Activated CD4-positive, alpha-beta T cell treated with anti-CD3 and anti-CD28 coated beads for 36 hours (primary cell): ENCODE measurements at regions of chr5 and their contacts with region 1.

Region 1: DNA sequence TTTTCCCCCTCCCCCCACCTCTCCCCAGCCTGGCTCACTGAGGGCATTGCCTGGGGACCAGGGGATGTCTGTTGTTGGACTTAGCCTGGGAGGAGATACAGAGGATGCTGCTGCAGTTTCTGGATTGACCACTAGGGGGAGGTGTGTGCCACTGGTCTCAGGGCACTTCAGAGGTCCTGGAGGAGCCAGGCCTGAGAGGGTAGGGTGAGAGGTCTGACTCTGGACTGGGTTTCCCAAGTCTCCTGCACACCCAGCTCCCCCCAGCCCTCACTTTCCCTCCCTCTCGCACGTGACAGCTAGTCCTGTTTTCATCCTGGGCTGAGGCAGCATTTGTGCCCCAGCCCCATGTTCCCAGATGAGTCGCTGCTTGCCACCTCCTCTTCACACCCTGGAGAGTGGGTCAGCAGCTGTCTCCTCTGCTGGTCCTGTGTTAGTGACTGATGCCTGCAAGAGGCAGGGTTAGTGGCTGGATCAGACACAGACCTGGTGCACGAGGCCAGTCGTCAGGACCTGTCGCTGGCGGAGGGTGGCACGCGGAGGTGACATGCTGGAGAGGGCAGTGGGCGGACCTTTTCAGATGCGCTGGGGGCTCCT is 4.4 kb downstream of the IL3 start:
- DNase-seq: peak; percentile 90
- ATAC-seq: peak; percentile 75
- H3K4me3 Mint-ChIP-seq: no peak overlapping the region
- H3K27ac Mint-ChIP-seq: no peak overlapping the region
- H3K4me1 Mint-ChIP-seq: peaks cover 19% of the 10 kb centered on the region
- H3K27me3 Mint-ChIP-seq: no peaks in the 10 kb centered on the region

Region 2: DNA sequence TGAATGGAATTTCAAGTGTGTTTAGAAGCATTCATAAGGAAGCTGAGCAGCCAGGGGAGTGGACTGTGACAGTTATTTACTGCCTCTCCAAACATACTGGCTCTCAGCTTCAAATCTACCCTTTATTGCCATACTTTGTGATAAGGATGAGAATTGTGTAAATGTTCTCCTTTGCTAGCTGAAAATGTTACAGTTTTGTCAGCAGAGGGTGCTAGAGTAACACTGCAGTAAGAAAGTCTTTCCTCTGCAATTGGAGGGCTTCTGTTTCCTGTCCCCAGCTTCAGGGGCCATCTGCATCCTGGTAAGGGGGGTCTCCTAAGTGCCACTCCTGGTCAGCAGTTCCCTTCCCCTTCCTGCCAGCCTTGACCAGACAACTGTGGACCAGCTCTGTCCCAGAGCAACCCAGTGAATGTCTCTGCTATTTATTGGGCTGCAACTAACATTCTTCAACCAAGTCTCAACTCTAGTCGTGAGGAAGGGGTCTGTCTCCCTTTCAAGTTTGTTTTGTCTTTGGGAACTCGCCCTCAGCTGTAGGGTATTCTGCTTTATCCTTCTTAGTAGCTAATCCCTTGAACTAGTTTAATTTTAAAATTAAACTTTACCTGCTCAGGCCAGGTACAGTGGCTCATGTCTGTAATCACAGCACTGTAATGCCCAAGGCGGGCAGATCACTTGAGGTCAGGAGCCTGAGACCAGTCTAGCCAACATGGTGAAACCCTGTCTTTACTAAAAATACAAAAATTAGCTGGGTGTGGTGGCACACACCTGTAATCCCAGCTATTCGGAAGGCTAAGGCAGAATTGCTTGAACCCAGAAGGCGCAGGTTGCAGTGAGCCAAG is 475.1 kb before region 1 on chr5:
- CTCF ChIA-PET with region 1: interaction called, 30 read pairs
- POLR2A ChIA-PET with region 1: no interaction called
- intact Hi-C with region 1: loop called (anchors 1 kb)
- DNase-seq: peak; percentile 13
- ATAC-seq: peak; percentile 74
- H3K4me3 Mint-ChIP-seq: no peak overlapping the region
- H3K27ac Mint-ChIP-seq: no peak overlapping the region
- H3K4me1 Mint-ChIP-seq: peaks cover 40% of the 10 kb centered on the region
- H3K27me3 Mint-ChIP-seq: no peaks in the 10 kb centered on the region

Region 3: DNA sequence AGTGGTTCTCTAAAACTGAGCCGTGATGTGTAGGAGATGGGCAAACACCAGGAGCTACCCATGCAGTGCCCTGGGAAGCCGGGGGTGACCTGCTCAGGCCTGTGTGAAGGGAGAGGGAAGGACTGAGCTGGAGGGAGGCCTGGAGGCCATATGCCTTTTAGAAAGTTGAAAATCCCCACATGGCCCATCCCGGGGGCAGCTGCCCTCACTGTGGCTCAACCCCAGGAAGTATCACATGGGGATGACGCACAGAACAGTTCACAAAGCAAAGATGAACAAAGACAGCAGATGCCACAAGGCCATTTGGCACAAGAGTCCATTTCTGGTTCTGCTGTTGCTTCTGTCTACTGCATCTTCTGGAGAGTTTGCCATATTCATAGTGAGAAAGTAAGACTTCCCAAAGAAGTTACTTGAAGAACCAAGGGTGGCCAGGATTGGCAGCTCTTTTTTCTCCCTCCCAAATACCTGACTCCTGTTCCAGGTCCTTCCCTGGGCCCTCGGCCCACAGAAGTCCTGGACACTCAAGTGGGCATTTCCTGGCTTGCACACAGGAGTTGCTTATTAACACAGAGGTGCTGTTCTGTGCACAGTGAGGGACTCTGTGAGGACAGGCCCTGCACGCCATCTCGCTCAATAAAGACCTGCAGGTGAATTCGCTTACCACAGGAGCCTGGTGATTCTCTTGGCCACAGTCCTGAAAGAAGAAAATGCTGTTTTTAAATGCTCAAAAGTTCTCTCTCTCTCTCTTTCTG is 78.5 kb before region 1 on chr5:
- CTCF ChIA-PET with region 1: no interaction called
- POLR2A ChIA-PET with region 1: no interaction called
- intact Hi-C with region 1: no loop called
- DNase-seq: no peak
- ATAC-seq: no peak
- H3K4me3 Mint-ChIP-seq: no peak overlapping the region
- H3K27ac Mint-ChIP-seq: no peak overlapping the region
- H3K4me1 Mint-ChIP-seq: peaks cover 4% of the 10 kb centered on the region
- H3K27me3 Mint-ChIP-seq: no peaks in the 10 kb centered on the region

Region 4: GRCh38 chr5:132007399-132008165 is 57.3 kb before region 1 on chr5:
- CTCF ChIA-PET with region 1: interaction called, 16 read pairs
- POLR2A ChIA-PET with region 1: no interaction called
- intact Hi-C with region 1: loop called in 1 of 2 experiments (anchors 2 kb)
- DNase-seq: peak; percentile 90
- ATAC-seq: peak; percentile 79
- H3K4me3 Mint-ChIP-seq: no peak overlapping the region
- H3K27ac Mint-ChIP-seq: no peak overlapping the region
- H3K4me1 Mint-ChIP-seq: peaks cover 21% of the 10 kb centered on the region
- H3K27me3 Mint-ChIP-seq: peaks cover 28% of the 10 kb centered on the region

Region 5: GRCh38 chr5:132180134-132180745 is 115.4 kb after region 1 on chr5:
- CTCF ChIA-PET with region 1: interaction called, 23 read pairs
- POLR2A ChIA-PET with region 1: no interaction called
- intact Hi-C with region 1: loop called (anchors 1 kb)
- DNase-seq: peak; percentile 19
- ATAC-seq: peak; percentile 38
- H3K4me3 Mint-ChIP-seq: no peak overlapping the region
- H3K27ac Mint-ChIP-seq: peak overlapping the region; percentile 73
- H3K4me1 Mint-ChIP-seq: peaks cover 36% of the 10 kb centered on the region
- H3K27me3 Mint-ChIP-seq: no peaks in the 10 kb centered on the region

Region 6: DNA sequence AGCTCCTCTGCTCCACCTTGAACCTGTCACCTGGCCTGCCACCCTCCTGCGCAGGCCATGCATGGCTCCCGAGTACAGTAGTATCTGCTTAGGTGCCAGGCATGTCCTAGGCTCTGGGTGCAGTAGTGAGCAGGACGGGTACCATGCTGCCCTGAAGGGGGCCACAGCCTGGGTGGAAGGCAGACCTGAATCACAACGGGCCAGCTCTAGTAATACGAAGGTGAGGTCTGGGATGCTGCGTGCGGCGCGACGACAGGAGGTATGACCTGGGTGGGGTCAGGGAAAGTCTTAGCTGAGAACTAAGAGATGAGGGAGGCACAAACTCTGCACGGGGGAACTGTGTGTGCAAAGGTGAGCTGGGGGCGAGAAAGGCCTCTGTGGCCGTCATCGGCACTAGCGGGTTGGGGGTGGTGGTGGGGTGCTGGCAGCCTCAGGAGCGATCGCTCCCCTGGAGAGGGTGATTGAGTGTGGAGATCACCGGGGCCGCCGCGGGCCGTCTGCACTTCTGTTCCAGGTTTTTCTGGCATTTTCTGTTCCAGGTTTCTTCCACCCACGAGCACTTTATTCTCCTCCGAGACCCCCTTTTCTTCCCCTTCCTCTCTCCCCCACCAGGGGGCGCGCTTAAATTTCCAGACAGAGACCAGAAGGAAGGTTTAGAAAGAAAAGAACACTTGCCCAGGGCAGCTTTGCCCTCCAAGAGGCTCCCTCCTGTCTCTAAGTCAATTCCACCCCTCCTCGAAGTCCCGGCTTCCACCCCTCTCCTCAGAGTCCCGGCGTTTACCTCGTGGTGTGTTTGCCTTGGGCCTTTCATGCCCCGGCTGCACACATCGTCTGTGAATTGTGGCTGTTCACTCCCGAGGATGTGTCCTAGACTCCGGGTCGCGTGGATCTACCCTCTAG is 207.7 kb after region 1 on chr5:
- CTCF ChIA-PET with region 1: interaction called, 4 read pairs
- POLR2A ChIA-PET with region 1: no interaction called
- intact Hi-C with region 1: loop called in 1 of 2 experiments (anchors 5 kb)
- DNase-seq: peak; percentile 85
- ATAC-seq: peak; percentile 42
- H3K4me3 Mint-ChIP-seq: no peak overlapping the region
- H3K27ac Mint-ChIP-seq: no peak overlapping the region
- H3K4me1 Mint-ChIP-seq: peaks cover 2% of the 10 kb centered on the region
- H3K27me3 Mint-ChIP-seq: peaks cover 18% of the 10 kb centered on the region

Region 7: DNA sequence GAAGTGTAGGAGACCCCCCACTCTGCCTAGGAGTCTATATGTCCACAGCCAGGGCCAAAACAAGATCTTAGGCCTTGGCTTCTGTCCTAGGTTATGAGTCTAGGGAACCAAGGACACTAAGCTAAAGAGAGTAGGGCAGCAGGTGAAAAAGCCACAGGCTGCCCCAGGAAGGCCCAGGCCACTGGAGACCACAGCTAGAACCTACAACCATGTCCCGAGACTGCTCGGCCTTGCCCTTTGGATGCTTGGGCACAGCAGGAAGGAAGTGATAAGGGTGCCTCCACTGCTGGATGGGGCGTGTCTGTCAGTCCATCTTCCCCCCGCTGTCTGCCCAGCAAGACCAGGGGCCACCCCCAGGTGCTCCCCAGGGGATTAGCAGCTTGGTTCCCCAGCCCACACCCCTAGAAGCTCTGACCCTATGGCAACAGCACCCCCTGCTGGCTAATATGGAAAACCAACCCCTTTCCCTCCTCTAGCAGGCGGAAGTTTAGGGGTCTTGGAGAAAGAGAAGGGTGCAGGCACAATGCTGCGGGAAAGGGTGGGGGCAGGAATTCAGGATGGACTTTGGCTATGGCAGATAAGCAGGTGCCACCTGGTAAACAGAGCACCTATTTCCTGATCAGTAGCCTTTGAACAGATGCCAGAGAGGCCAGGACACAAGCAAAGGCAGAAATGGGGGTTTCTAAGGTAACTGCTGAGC is 436.2 kb after region 1 on chr5:
- CTCF ChIA-PET with region 1: no interaction called
- POLR2A ChIA-PET with region 1: no interaction called
- intact Hi-C with region 1: loop called in 1 of 2 experiments (anchors 2 kb)
- DNase-seq: peak; percentile 85
- ATAC-seq: peak; percentile 34
- H3K4me3 Mint-ChIP-seq: no peak overlapping the region
- H3K27ac Mint-ChIP-seq: no peak overlapping the region
- H3K4me1 Mint-ChIP-seq: peaks cover 22% of the 10 kb centered on the region
- H3K27me3 Mint-ChIP-seq: no peaks in the 10 kb centered on the region